Ovary (tissue), 10 donors: ENCODE measurements at regions of chr12 and their contacts with region 1.

Region 1: DNA sequence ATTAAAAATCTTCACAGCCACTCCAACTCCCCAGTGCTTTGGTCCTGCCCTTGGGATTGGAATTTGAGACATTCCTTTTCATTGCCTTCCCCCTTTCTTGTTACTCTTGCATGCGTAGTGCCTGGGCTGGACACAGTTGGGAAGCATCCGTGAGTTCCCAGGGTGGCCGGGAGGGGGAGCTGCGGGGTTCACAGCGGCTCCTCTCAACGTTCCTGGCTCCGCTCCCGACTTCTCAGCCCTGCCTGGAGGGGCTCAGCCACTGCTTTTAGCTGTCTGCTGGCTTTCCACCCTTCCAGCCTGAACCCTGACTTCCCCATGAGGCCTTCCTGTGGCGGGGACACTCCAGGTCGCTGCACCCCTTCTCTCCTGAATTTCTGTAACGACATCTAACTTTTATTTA is 3.2 kb downstream of the TEX52 start:
- DNase-seq: peak; percentile 88 to 94 (median 91)
- H3K4me3 ChIP-seq: no peak overlapping the region
- H3K27ac ChIP-seq: no peak overlapping the region
- H3K4me1 ChIP-seq: peaks cover 11% of the 10 kb centered on the region
- H3K27me3 ChIP-seq: no peaks in the 10 kb centered on the region
- CTCF ChIP-seq: peak; percentile 66 to 72 (median 69)
- EP300 ChIP-seq: no peak
- POLR2A ChIP-seq: no peak

Region 2: GRCh38 chr12:2841056-2841650 is 12.5 kb before region 1 on chr12:
- intact Hi-C with region 1: no loop called
- DNase-seq: no peak
- H3K4me3 ChIP-seq: no peak overlapping the region
- H3K27ac ChIP-seq: no peak overlapping the region
- H3K4me1 ChIP-seq: no peaks in the 10 kb centered on the region
- H3K27me3 ChIP-seq: no peaks in the 10 kb centered on the region
- CTCF ChIP-seq: no peak
- EP300 ChIP-seq: no peak
- POLR2A ChIP-seq: no peak

Region 3: DNA sequence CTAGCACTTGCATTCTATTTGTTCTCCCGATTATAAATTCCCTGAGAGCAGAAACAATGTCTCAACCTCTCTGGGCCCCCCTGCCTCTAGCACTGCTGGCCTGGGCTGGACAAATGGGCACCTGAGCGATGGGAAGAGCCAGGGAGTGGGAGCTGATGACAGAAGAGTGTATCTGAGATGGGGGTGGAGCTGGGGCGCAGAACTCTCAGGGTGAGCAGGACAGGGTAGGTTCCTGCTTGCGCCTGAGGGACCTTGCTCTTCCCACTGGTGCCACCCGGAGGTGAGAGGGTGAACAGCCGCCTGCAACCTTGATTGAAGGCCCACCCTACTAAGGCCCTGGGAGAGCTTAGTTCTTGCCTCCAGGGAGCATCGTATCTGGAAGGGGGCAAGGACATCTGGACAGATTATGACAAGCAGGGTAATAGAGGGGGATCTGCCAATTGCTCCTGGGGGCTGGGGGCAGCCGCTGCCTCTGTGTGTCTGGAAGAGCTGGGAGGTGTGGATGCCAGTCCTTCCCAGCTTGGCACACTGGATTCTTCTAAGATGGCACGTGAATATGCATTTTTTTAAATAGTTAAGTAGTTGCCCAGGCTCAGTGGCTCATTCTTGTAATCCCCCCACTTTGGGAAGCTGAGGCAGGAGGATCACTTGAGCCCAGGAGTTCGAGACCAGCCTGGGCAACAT is 180.6 kb after region 1 on chr12:
- intact Hi-C with region 1: loop called in 3 of 4 experiments (anchors 5 to 10 kb)
- DNase-seq: peak; percentile 31 to 69 (median 51)
- H3K4me3 ChIP-seq: no peak overlapping the region
- H3K27ac ChIP-seq: no peak overlapping the region
- H3K4me1 ChIP-seq: no peaks in the 10 kb centered on the region
- H3K27me3 ChIP-seq: no peaks in the 10 kb centered on the region
- CTCF ChIP-seq: peak in 2 of 3 donors; percentile 23 to 27
- EP300 ChIP-seq: no peak
- POLR2A ChIP-seq: no peak